Astrocyte of the cerebellum (primary cell): ENCODE measurements at regions of chr9 and their contacts with region 1.

Region 1: DNA sequence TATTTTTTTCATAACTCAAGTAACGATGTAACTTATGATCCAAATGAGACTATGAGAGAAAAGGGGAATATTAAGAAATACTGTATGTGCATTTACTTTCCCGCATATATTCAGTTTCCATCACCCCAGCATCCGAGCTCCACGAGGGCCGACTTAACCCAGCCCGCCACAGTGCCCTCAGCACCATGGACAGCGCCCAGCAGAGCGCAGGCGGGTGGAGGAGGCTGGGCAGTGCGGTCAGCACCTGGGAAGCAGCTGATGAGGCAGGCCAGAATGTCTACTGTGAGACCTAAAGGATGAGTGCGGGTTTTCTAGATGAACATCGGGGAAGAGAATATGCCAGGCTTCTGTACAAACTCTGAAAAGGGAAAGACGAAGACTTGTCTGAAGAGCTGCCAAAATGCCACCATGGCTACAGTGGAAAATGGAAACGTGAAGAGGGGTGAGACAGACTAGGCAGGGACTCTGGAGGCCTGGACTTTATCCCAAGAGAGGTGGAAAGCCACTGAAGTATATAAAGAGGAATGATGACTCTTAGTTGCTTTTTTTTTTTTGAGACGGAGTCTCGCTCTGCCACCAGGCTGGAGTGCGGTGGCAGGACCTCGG is 34.5 kb upstream of the MED27 start:
- DNase-seq: peak; percentile 46
- H3K4me3 ChIP-seq: no peak overlapping the region
- CTCF ChIP-seq: no peak

Region 2: GRCh38 chr9:131809941-131810344 is 304.3 kb before region 1 on chr9:
- in situ Hi-C with region 1: loop called (anchors 25 kb)
- DNase-seq: peak; percentile 24
- H3K4me3 ChIP-seq: no peak overlapping the region
- CTCF ChIP-seq: no peak

Region 3: GRCh38 chr9:132069046-132069898 is 44.9 kb before region 1 on chr9:
- in situ Hi-C with region 1: no loop called
- DNase-seq: peak; percentile 74
- H3K4me3 ChIP-seq: peak overlapping the region; percentile 4
- CTCF ChIP-seq: no peak

Region 4: GRCh38 chr9:132894356-132895240 is 780.4 kb after region 1 on chr9:
- in situ Hi-C with region 1: no loop called
- DNase-seq: no peak
- H3K4me3 ChIP-seq: no peak overlapping the region
- CTCF ChIP-seq: no peak